ENCODE measurements at regions of chr5 and their contacts with region 1.

Region 1: GRCh38 chr5:78829811-78830527 is 155.1 kb downstream of the ARSB start:
- DNase-seq: peak; percentile 25
- ATAC-seq: peak; percentile 54
- H3K4me3 ChIP-seq: no peak overlapping the region
- H3K27ac ChIP-seq: peak overlapping the region; percentile 9; the same call in 1 of the 2 replicates
- H3K4me1 ChIP-seq: peaks cover 11% of the 10 kb centered on the region
- H3K27me3 ChIP-seq: no peaks in the 10 kb centered on the region
- CTCF ChIP-seq: no peak
- POLR2A ChIP-seq: no peak
- RAD21 ChIP-seq: no peak

Region 2: GRCh38 chr5:78886341-78887230 is 56.6 kb after region 1 on chr5:
- CTCF ChIA-PET with region 1: interaction called, 4 read pairs
- POLR2A ChIA-PET with region 1: no interaction called
- dilution Hi-C with region 1: no loop called
- in situ Hi-C with region 1: no loop called
- intact Hi-C with region 1: loop called (anchors 10 kb)
- DNase-seq: peak; percentile 23
- ATAC-seq: no peak
- H3K4me3 ChIP-seq: no peak overlapping the region
- H3K27ac ChIP-seq: no peak overlapping the region
- H3K4me1 ChIP-seq: peaks cover 3% of the 10 kb centered on the region; the same call in 1 of the 2 replicates
- H3K27me3 ChIP-seq: no peaks in the 10 kb centered on the region
- CTCF ChIP-seq: peak; percentile 63
- POLR2A ChIP-seq: no peak
- RAD21 ChIP-seq: peak; percentile 51

Measured in IMR-90 (cell line).